Heart right ventricle (tissue), 16 donors: ENCODE measurements at regions of chr15 and their contacts with region 1.

Region 1: GRCh38 chr15:58269455-58270414 is 131.6 kb downstream of the AQP9 start:
- DNase-seq: peak in 1 of 2 donors; percentile 56
- ATAC-seq: peak; percentile 77 to 96 (median 92)
- H3K4me3 ChIP-seq: no peak overlapping the region
- H3K27ac ChIP-seq: no peak overlapping the region
- H3K4me1 ChIP-seq: peaks cover 0 to 10% (median 0%) of the 10 kb centered on the region in 9 donors
- H3K27me3 ChIP-seq: no peaks in the 10 kb centered on the region
- CTCF ChIP-seq: peak; percentile 60 to 86 (median 79)

Region 2: GRCh38 chr15:58139276-58139988 is 130.3 kb before region 1 on chr15:
- intact Hi-C with region 1: no loop called
- DNase-seq: no peak
- ATAC-seq: peak in 1 of 8 donors; percentile 50
- H3K4me3 ChIP-seq: peak overlapping the region in 1 of 10 donors; percentile 39
- H3K27ac ChIP-seq: peak overlapping the region in 2 of 10 donors; percentile 53 to 90
- H3K4me1 ChIP-seq: peaks cover 0 to 30% (median 0%) of the 10 kb centered on the region in 9 donors
- H3K27me3 ChIP-seq: peaks cover 0 to 9% (median 0%) of the 10 kb centered on the region in 7 donors
- CTCF ChIP-seq: no peak

Region 3: GRCh38 chr15:58546635-58547627 is 277.2 kb after region 1 on chr15:
- intact Hi-C with region 1: loop called in 1 of 10 experiments (anchors 10 kb)
- DNase-seq: peak; percentile 56 to 76
- ATAC-seq: peak; percentile 74 to 94 (median 90)
- H3K4me3 ChIP-seq: no peak overlapping the region
- H3K27ac ChIP-seq: peak overlapping the region in 9 of 10 donors; percentile 54 to 82 (median 72)
- H3K4me1 ChIP-seq: peaks cover 0 to 42% (median 18%) of the 10 kb centered on the region in 9 donors
- H3K27me3 ChIP-seq: no peaks in the 10 kb centered on the region
- CTCF ChIP-seq: no peak

Region 4: DNA sequence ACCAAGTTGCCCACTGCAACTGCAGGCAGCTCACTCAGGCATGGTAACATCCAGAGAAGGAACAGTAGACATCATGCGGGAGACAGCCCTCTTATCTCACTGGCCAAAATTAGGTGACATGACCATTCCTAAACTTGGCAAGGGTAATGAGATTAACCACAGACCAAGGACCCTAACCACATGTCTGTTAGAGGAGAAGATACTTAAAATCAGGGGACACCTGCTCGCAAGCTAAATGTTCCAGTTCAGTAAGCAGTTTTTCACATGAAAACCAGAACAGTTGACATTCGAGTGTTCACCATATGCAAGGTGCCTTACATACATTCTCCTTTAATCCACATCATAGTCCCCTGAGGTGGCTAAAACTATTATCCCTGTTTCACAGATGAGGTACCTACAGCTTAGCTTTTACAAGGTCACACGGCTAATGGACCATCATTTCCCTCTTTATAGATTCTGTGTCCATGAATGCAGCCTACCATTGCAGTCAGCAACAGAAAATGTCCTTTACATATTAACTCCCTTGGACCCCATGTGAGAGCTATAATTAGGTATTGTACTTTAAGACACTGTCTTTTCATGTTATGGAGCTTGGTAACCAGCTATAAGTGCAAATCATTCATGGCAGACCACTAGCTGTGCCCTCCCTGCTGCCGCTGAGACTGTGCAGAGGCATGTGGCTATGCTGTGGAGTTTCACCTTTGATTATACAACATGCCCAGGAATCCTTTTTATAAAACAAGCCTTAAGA is 316.1 kb after region 1 on chr15:
- intact Hi-C with region 1: loop called in 2 of 10 experiments (anchors 5 to 10 kb)
- DNase-seq: no peak
- ATAC-seq: peak in 1 of 8 donors; percentile 11
- H3K4me3 ChIP-seq: no peak overlapping the region
- H3K27ac ChIP-seq: no peak overlapping the region
- H3K4me1 ChIP-seq: peaks cover 0 to 23% (median 8%) of the 10 kb centered on the region in 9 donors
- H3K27me3 ChIP-seq: no peaks in the 10 kb centered on the region
- CTCF ChIP-seq: no peak

Region 5: DNA sequence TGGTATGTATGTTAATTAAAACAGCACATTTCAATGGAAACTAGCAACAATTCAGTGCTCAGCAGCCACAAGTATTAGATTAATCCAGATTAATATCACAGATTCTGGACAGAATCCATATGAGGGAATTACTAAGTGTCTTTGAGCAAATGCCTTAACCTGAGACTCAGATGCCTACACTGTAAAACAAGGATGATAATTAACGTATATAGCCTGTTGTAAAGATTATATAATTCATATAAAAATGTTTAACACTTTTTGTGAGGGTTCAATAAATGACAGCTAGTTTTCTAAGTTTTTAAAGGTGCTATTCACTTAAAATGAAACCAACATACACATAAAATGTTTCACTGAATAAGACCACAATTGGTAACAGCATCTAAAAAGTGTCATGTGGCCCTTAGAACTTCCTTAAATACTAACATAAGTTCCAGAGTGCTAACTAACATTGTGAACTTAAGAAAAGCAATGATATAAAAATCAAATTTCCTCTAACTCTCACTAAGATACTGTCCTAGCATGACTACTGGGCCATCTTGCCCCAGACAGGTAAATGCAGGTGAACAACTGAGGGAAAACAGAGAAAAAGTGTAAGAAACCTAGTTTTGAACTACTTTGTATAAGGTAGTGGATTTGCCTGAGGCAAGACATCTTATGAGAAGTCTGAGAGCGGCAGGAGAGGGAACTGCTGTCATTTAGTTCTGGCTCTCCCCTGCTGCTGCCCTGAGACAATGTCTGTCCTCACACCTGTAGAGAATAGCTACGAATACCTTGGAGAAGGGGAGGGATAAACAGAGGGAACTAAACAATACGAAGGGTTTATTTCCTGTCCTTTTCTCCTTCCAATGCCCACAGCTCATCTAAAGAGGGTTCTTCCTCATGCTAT is 328.5 kb after region 1 on chr15:
- intact Hi-C with region 1: loop called in 1 of 10 experiments (anchors 10 kb)
- DNase-seq: no peak
- ATAC-seq: no peak
- H3K4me3 ChIP-seq: no peak overlapping the region
- H3K27ac ChIP-seq: peak overlapping the region in 1 of 10 donors; percentile 26
- H3K4me1 ChIP-seq: peaks cover 0 to 4% (median 0%) of the 10 kb centered on the region in 9 donors
- H3K27me3 ChIP-seq: no peaks in the 10 kb centered on the region
- CTCF ChIP-seq: no peak

Region 6: GRCh38 chr15:58666957-58667356 is 397.2 kb after region 1 on chr15:
- intact Hi-C with region 1: loop called in 1 of 10 experiments (anchors 10 kb)
- DNase-seq: no peak
- ATAC-seq: peak in 1 of 8 donors; percentile 40
- H3K4me3 ChIP-seq: no peak overlapping the region
- H3K27ac ChIP-seq: peak overlapping the region in 4 of 10 donors; percentile 13 to 42 (median 32)
- H3K4me1 ChIP-seq: peaks cover 3 to 23% (median 7%) of the 10 kb centered on the region in 9 donors
- H3K27me3 ChIP-seq: no peaks in the 10 kb centered on the region
- CTCF ChIP-seq: no peak

Region 7: GRCh38 chr15:58758138-58758537 is 488.4 kb after region 1 on chr15:
- intact Hi-C with region 1: loop called in 4 of 10 experiments (anchors 5 to 10 kb)
- DNase-seq: no peak
- ATAC-seq: peak in 1 of 8 donors; percentile 53
- H3K4me3 ChIP-seq: no peak overlapping the region
- H3K27ac ChIP-seq: no peak overlapping the region
- H3K4me1 ChIP-seq: no peaks in the 10 kb centered on the region
- H3K27me3 ChIP-seq: no peaks in the 10 kb centered on the region
- CTCF ChIP-seq: peak in 7 of 9 donors; percentile 21 to 57 (median 43)